ENCODE measurements at regions of chr15 and their contacts with region 1.

Region 1: GRCh38 chr15:89740137-89740536 is 10.9 kb downstream of the MESP1 start:
- DNase-seq: peak; percentile 79
- H3K4me3 ChIP-seq: no peak overlapping the region
- H3K27ac ChIP-seq: no peak overlapping the region
- H3K4me1 ChIP-seq: no peaks in the 10 kb centered on the region
- H3K27me3 ChIP-seq: no peaks in the 10 kb centered on the region
- CTCF ChIP-seq: peak; percentile 85

Region 2: GRCh38 chr15:89728254-89728653 is 11.9 kb before region 1 on chr15:
- CTCF ChIA-PET with region 1: interaction called, 3 read pairs
- POLR2A ChIA-PET with region 1: interaction called, 33 read pairs
- intact Hi-C with region 1: no loop called
- DNase-seq: peak; percentile 66
- H3K4me3 ChIP-seq: no peak overlapping the region
- H3K27ac ChIP-seq: no peak overlapping the region
- H3K4me1 ChIP-seq: peaks cover 10% of the 10 kb centered on the region
- H3K27me3 ChIP-seq: no peaks in the 10 kb centered on the region
- CTCF ChIP-seq: no peak

Region 3: GRCh38 chr15:89874926-89875564 is 134.9 kb after region 1 on chr15:
- CTCF ChIA-PET with region 1: interaction called, 23 read pairs
- POLR2A ChIA-PET with region 1: no interaction called
- intact Hi-C with region 1: loop called (anchors 5 kb)
- DNase-seq: peak; percentile 80
- H3K4me3 ChIP-seq: no peak overlapping the region
- H3K27ac ChIP-seq: no peak overlapping the region
- H3K4me1 ChIP-seq: no peaks in the 10 kb centered on the region
- H3K27me3 ChIP-seq: no peaks in the 10 kb centered on the region
- CTCF ChIP-seq: peak; percentile 98

Region 4: GRCh38 chr15:90086868-90087268 is 346.7 kb after region 1 on chr15:
- CTCF ChIA-PET with region 1: interaction called, 11 read pairs
- POLR2A ChIA-PET with region 1: no interaction called
- intact Hi-C with region 1: loop called (anchors 2 kb)
- DNase-seq: peak; percentile 75
- H3K4me3 ChIP-seq: no peak overlapping the region
- H3K27ac ChIP-seq: no peak overlapping the region
- H3K4me1 ChIP-seq: no peaks in the 10 kb centered on the region
- H3K27me3 ChIP-seq: no peaks in the 10 kb centered on the region
- CTCF ChIP-seq: peak; percentile 82

Measured in A673 (cell line).